Activated B cell treated with CpG ODN at 0.5 μM for 24 hours (primary cell): ENCODE measurements at regions of chr20 and their contacts with region 1.

Region 1: DNA sequence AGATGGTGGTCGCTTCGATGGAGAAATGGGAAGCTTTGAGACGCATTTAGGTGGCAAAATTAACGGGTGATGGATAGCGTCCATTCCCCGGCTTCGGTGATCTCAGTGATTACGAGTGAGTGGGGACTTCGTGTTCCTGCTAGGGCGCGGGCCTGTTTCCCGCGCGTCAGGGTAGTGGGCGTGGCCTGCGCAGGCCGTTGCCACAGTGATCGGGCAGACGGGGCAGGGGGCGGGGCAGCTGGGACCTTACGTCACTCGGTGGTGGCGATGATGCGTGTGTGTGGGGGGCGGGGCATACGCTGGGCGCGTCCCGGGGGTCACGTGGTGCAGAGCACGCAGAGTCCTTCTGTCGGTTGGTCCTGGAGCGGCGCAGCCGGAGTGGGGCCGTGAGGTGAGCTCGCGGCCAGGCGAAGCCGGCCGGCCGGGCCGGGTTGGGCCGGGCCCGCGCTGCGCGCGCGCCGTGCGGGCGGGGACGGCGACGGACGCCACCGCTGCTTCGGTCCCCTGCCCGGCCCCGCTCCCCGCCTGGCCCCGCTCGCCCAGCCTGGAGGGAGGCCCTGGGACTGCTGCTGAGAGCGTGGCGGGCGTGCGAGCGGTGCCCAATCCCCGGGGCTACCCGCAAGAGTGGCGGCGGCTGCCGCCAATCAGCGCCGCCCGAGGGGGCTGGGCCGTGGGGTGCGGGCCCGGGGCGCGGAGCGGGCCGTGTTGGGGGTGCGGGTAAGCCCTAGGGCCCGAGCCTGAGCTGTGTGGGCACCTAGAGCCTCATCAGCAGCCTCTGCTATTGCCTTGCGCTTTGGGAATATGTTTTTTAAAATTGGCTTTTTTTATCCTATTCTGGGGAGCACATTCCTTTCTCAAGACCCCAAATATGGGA is at the start of gene PHF20:
- DNase-seq: peak; percentile 98
- ATAC-seq: peak; percentile 85
- H3K4me3 Mint-ChIP-seq: peak within 1 kb of the TSS; percentile 86
- H3K27ac Mint-ChIP-seq: peak within 1 kb of the TSS; percentile 95
- H3K4me1 Mint-ChIP-seq: peaks cover 79% of the 10 kb centered on the region
- H3K27me3 Mint-ChIP-seq: no peaks in the 10 kb centered on the region
- CTCF ChIP-seq: no peak
- total RNA-seq, gene PHF20: 72.3 and 86.0 TPM in 2 replicates

Region 2: GRCh38 chr20:35680452-35681183 is 91.3 kb before region 1 on chr20:
- CTCF ChIA-PET with region 1: no interaction called
- POLR2A ChIA-PET with region 1: interaction called, 10 read pairs
- intact Hi-C with region 1: no loop called
- DNase-seq: no peak
- ATAC-seq: peak; percentile 78
- H3K4me3 Mint-ChIP-seq: peak overlapping the region; percentile 2
- H3K27ac Mint-ChIP-seq: peak overlapping the region; percentile 57
- H3K4me1 Mint-ChIP-seq: peaks cover 14% of the 10 kb centered on the region
- H3K27me3 Mint-ChIP-seq: no peaks in the 10 kb centered on the region
- CTCF ChIP-seq: no peak

Region 3: GRCh38 chr20:35791821-35792220 is 19.9 kb after region 1 on chr20:
- CTCF ChIA-PET with region 1: no interaction called
- POLR2A ChIA-PET with region 1: interaction called, 11 read pairs
- intact Hi-C with region 1: loop called (anchors 2 kb)
- DNase-seq: no peak
- ATAC-seq: no peak
- H3K4me3 Mint-ChIP-seq: no peak overlapping the region
- H3K27ac Mint-ChIP-seq: peak overlapping the region; percentile 5
- H3K4me1 Mint-ChIP-seq: peaks cover 22% of the 10 kb centered on the region
- H3K27me3 Mint-ChIP-seq: no peaks in the 10 kb centered on the region
- CTCF ChIP-seq: no peak

Region 4: DNA sequence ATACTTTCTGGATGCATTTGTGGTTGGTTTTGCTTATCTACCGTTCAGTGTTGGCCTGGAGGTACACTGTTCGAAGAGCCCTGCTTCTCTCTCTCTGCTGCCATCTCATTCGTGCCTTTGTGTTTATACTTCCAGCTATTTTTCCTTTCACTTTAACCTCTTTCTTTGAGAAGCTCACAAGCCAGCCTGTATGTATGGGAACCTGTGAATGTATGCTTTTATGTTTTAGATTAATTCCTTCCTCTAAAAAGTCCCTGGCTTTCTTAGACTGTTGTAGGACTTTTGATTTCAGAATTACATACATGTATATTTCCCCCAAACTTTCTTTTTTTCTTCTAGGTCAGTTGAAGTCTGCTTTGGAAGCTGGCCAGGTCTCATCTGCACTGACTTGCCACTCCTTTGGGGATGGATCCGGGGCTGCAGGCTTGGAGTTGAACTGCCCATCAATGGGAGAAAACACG is 99.4 kb after region 1 on chr20:
- CTCF ChIA-PET with region 1: no interaction called
- POLR2A ChIA-PET with region 1: interaction called, 14 read pairs
- intact Hi-C with region 1: no loop called
- DNase-seq: no peak
- ATAC-seq: no peak
- H3K4me3 Mint-ChIP-seq: no peak overlapping the region
- H3K27ac Mint-ChIP-seq: no peak overlapping the region
- H3K4me1 Mint-ChIP-seq: no peaks in the 10 kb centered on the region
- H3K27me3 Mint-ChIP-seq: no peaks in the 10 kb centered on the region
- CTCF ChIP-seq: no peak